Transverse colon (tissue), 4 donors: ENCODE measurements at regions of chr3 and their contacts with region 1.

Region 1: GRCh38 chr3:59049671-59050331 is at the start of gene CFAP20DC:
- DNase-seq: peak; percentile 91
- H3K4me3 ChIP-seq: peak within 1 kb of the TSS; percentile 42 to 53 (median 46)
- H3K27ac ChIP-seq: peak within 1 kb of the TSS in 3 of 4 donors; percentile 47 to 71 (median 66)
- H3K4me1 ChIP-seq: peaks cover 0 to 3% (median 0%) of the 10 kb centered on the region in 4 donors
- H3K27me3 ChIP-seq: no peaks in the 10 kb centered on the region
- CTCF ChIP-seq: no peak
- EP300 ChIP-seq: no peak
- POLR2A ChIP-seq: peak; percentile 52
- total RNA-seq, gene CFAP20DC: 0.20 to 0.82 TPM in 2 of 4 donors, not detected in the others

Region 2: GRCh38 chr3:57983734-57984518 is 1065.9 kb before region 1 on chr3:
- in situ Hi-C with region 1: no loop called
- intact Hi-C with region 1: no loop called
- DNase-seq: peak; percentile 80
- H3K4me3 ChIP-seq: no peak overlapping the region
- H3K27ac ChIP-seq: peak overlapping the region; percentile 52 to 73 (median 67)
- H3K4me1 ChIP-seq: peaks cover 12 to 55% (median 21%) of the 10 kb centered on the region in 4 donors
- H3K27me3 ChIP-seq: no peaks in the 10 kb centered on the region
- CTCF ChIP-seq: no peak
- EP300 ChIP-seq: peak; percentile 18
- POLR2A ChIP-seq: no peak

Region 3: GRCh38 chr3:58640700-58641372 is 409.0 kb before region 1 on chr3:
- in situ Hi-C with region 1: loop called in 2 of 4 experiments (anchors 10 to 25 kb)
- intact Hi-C with region 1: no loop called
- DNase-seq: peak; percentile 81
- H3K4me3 ChIP-seq: no peak overlapping the region
- H3K27ac ChIP-seq: peak overlapping the region in 1 of 4 donors; percentile 17
- H3K4me1 ChIP-seq: peaks cover 0 to 6% (median 0%) of the 10 kb centered on the region in 4 donors
- H3K27me3 ChIP-seq: no peaks in the 10 kb centered on the region
- CTCF ChIP-seq: peak; percentile 75 to 90 (median 82)
- EP300 ChIP-seq: no peak
- POLR2A ChIP-seq: no peak

Region 4: DNA sequence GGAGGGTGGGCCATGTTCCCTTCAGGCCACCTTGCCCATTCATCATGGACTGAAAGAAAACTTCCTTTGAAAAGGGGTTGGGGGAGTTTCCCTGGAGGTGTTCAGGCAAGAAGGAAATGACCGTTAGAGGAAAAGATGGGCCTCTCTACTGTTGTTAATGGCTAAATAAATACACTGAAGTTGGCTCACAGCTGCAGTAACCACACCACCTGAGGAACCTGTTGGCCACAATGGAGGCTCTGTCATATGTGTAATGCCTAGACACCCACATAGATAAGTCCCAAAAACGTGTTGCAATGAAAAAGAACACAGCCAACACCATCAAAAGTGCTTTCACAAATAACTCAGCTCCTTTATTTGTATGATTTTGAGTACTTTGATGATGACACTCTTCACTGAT is 345.1 kb before region 1 on chr3:
- in situ Hi-C with region 1: no loop called
- intact Hi-C with region 1: no loop called
- DNase-seq: no peak
- H3K4me3 ChIP-seq: no peak overlapping the region
- H3K27ac ChIP-seq: no peak overlapping the region
- H3K4me1 ChIP-seq: peaks cover 0 to 6% (median 0%) of the 10 kb centered on the region in 4 donors
- H3K27me3 ChIP-seq: no peaks in the 10 kb centered on the region
- CTCF ChIP-seq: no peak
- EP300 ChIP-seq: no peak
- POLR2A ChIP-seq: no peak